ENCODE measurements at regions of chr14 and their contacts with region 1.

Region 1: GRCh38 chr14:76812211-76813044 is at the start of gene ANGEL1:
- DNase-seq: peak; percentile 80
- ATAC-seq: peak; percentile 93
- H3K4me3 ChIP-seq: peak within 1 kb of the TSS; percentile 78 to 96 (median 87)
- H3K27ac ChIP-seq: peak within 1 kb of the TSS; percentile 67
- H3K4me1 ChIP-seq: peaks cover 22% of the 10 kb centered on the region
- H3K27me3 ChIP-seq: peaks cover 0 to 13% of the 10 kb centered on the region in 2 experiments; a peak in 1 of 5 replicates
- CTCF ChIP-seq: no peak
- EP300 ChIP-seq: peak in 1 of 2 experiments; percentile 60; a peak in 2 of 4 replicates
- POLR2A ChIP-seq: peak; percentile 82 to 95
- RAD21 ChIP-seq: no peak; the same call in 1 of the 2 replicates
- total RNA-seq, gene ANGEL1: 9.0 and 14.3 TPM in 2 replicates

Region 2: DNA sequence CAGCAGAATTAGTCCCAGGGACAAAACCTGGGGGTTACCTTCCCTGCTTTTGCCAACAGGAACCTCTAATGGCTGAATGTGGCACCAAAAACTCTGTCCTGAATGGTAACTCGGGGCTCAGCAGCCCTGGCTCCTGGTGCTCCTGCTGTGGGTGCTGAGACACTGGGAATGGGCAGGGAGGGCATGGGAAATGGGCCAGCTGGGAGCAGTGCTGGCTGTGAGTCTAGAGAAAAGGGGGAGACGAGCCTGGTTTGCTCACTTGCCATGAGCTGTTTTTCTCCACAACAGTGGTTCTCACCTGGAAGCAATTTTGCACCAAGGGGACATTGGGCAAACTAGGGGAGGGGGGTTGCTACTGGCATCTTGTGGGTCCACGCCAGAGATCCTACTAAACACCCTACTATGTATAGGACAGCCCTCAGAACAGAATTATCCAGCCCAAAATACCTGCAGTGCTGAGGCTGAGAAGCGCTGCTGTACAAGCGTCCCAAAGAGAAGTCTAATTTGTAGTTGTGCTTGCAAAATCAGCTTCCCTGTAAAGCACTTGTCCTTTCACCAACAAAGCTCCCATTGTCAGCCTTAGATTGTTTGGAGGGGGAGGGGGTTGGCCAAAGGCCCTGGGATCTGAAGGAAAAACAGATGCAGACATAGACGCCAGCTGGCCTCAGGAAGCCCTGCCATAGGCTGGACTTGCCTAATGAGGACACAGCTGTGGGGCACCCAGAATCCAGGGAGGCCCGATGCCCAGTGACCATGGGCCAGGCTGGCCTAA is 17.4 kb after region 1 on chr14:
- CTCF ChIA-PET with region 1: no interaction called
- POLR2A ChIA-PET with region 1: interaction called, 62 read pairs
- in situ Hi-C with region 1: no loop called
- intact Hi-C with region 1: loop called (anchors 2 kb)
- DNase-seq: peak; percentile 91
- ATAC-seq: peak; percentile 81
- H3K4me3 ChIP-seq: peak overlapping the region; percentile 16 to 53 (median 18); a peak in 4 of 6 replicates
- H3K27ac ChIP-seq: peak overlapping the region; percentile 67
- H3K4me1 ChIP-seq: peaks cover 66% of the 10 kb centered on the region
- H3K27me3 ChIP-seq: no peaks in the 10 kb centered on the region
- CTCF ChIP-seq: no peak
- EP300 ChIP-seq: peak in 1 of 2 experiments; percentile 22; a peak in 1 of 4 replicates
- POLR2A ChIP-seq: no peak
- RAD21 ChIP-seq: no peak; the same call in 1 of the 2 replicates